Sigmoid colon (tissue), 7 donors: ENCODE measurements at regions of chr16 and their contacts with region 1.

Region 1: DNA sequence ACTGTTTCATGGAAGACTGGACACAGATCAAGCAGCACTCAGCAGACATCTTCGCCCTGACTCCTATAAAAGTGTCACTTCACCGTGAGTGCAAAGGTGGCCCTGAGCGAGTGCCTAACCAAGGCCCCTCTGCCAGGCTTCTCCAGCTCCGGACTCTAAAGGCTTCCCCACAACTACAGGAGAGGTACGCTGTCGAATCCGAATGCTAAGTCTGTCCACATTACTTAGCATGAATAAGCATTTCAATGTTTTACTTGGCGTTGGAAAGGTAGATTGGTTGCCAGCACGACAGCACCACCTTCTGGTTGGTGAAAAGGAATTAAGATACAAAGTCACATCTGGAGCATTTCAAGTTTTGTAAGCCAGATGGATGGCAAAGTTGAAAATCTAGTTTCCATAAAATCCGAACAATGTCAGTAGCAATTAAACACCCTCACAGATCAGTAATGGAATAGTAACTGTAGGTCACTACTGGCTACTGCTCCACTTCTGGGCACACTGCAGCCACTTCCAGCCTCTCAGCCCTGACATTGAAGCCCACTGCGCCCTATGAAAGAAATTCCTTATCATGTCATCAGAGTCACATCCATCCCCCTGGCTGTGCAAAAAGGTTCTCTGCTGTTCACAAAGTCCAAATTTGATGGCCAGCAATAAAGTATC is 100.9 kb downstream of the PARN start:
- DNase-seq: peak; percentile 91
- H3K4me3 ChIP-seq: peak overlapping the region in 3 of 4 donors; percentile 28 to 38 (median 29)
- H3K27ac ChIP-seq: peak overlapping the region; percentile 48 to 56 (median 50)
- H3K4me1 ChIP-seq: peaks cover 0 to 33% (median 23%) of the 10 kb centered on the region in 4 donors
- H3K27me3 ChIP-seq: no peaks in the 10 kb centered on the region
- CTCF ChIP-seq: peak; percentile 68 to 88 (median 78)
- EP300 ChIP-seq: no peak
- POLR2A ChIP-seq: no peak

Region 2: DNA sequence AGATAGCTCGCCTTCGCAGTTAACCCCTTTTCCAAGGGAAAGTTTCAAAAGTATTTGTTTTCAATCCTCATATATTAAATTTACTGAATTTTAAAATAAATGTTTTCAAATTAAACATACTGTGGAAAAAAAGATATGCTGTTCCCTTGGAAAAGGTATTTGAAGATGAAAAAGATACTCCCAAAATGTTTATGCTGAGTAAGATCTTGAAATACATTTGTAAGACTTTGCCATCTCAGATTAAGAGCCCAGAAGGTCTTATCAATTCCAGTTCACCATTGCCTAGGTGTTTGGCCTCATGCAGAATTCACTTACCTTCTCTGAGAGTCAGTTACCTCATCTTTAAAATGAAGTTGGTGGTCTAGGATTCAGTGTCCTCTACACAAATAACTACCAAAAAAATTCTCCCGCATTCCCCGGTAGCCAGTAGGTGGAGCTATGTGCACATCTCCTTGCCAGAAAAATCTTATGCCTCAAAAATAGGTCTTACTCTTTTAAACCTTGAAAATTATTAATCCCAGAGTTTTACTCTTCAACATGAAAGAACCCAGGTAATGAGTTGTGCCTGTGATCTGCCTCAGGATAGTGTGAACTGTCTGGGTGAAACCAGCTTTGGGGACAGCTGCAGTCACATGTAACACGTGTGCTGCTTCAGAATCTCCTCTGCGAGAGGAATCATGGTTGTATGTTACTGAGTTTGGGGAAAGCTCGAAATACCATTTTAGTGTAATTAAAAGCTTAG is 279.7 kb before region 1 on chr16:
- intact Hi-C with region 1: loop called (anchors 2 kb)
- DNase-seq: no peak
- H3K4me3 ChIP-seq: no peak overlapping the region
- H3K27ac ChIP-seq: no peak overlapping the region
- H3K4me1 ChIP-seq: peaks cover 0 to 2% (median 0%) of the 10 kb centered on the region in 4 donors
- H3K27me3 ChIP-seq: no peaks in the 10 kb centered on the region
- CTCF ChIP-seq: peak; percentile 50 to 81 (median 67)
- EP300 ChIP-seq: no peak
- POLR2A ChIP-seq: no peak

Region 3: GRCh38 chr16:14285513-14286385 is 243.4 kb before region 1 on chr16:
- intact Hi-C with region 1: loop called (anchors 5 kb)
- DNase-seq: peak; percentile 96
- H3K4me3 ChIP-seq: peak overlapping the region; percentile 66 to 83 (median 82)
- H3K27ac ChIP-seq: peak overlapping the region; percentile 83 to 93 (median 88)
- H3K4me1 ChIP-seq: peaks cover 4 to 19% (median 13%) of the 10 kb centered on the region in 4 donors
- H3K27me3 ChIP-seq: no peaks in the 10 kb centered on the region
- CTCF ChIP-seq: no peak
- EP300 ChIP-seq: no peak
- POLR2A ChIP-seq: no peak